ENCODE measurements at regions of chr1 and their contacts with region 1.

Region 1: GRCh38 chr1:45694823-45695222 is 6.8 kb downstream of the TMEM69 start:
- DNase-seq: no peak
- ATAC-seq: no peak
- H3K4me3 ChIP-seq: no peak overlapping the region
- H3K27ac ChIP-seq: no peak overlapping the region
- H3K4me1 ChIP-seq: peaks cover under 1% of the 10 kb centered on the region; the same call in 1 of the 2 replicates
- H3K27me3 ChIP-seq: no peaks in the 10 kb centered on the region
- CTCF ChIP-seq: no peak
- EP300 ChIP-seq: no peak
- POLR2A ChIP-seq: no peak
- RAD21 ChIP-seq: no peak

Region 2: GRCh38 chr1:45750298-45751038 is 55.6 kb after region 1 on chr1 and contains the start of gene IPP:
- CTCF ChIA-PET with region 1: no interaction called
- POLR2A ChIA-PET with region 1: no interaction called
- RAD21 ChIA-PET with region 1: no interaction called
- SMC1A ChIA-PET with region 1: interaction called, 4 read pairs
- in situ Hi-C with region 1: loop called (anchors 5 kb)
- intact Hi-C with region 1: no loop called
- DNase-seq: peak; percentile 90
- ATAC-seq: peak; percentile 98
- H3K4me3 ChIP-seq: peak within 1 kb of the TSS; percentile 91
- H3K27ac ChIP-seq: peak within 1 kb of the TSS; percentile 93
- H3K4me1 ChIP-seq: no peaks in the 10 kb centered on the region; the same call in 1 of the 2 replicates
- H3K27me3 ChIP-seq: no peaks in the 10 kb centered on the region
- CTCF ChIP-seq: peak; percentile 25 to 69 (median 31); a peak in 4 of 6 replicates
- EP300 ChIP-seq: no peak
- POLR2A ChIP-seq: peak; percentile 91
- RAD21 ChIP-seq: peak; percentile 51
- polyA plus RNA-seq, gene IPP: 9.5 to 11.2 TPM

Measured in GM12878 (cell line).